Mammary epithelial cell (primary cell): ENCODE measurements at regions of chr2 and their contacts with region 1.

Region 1: DNA sequence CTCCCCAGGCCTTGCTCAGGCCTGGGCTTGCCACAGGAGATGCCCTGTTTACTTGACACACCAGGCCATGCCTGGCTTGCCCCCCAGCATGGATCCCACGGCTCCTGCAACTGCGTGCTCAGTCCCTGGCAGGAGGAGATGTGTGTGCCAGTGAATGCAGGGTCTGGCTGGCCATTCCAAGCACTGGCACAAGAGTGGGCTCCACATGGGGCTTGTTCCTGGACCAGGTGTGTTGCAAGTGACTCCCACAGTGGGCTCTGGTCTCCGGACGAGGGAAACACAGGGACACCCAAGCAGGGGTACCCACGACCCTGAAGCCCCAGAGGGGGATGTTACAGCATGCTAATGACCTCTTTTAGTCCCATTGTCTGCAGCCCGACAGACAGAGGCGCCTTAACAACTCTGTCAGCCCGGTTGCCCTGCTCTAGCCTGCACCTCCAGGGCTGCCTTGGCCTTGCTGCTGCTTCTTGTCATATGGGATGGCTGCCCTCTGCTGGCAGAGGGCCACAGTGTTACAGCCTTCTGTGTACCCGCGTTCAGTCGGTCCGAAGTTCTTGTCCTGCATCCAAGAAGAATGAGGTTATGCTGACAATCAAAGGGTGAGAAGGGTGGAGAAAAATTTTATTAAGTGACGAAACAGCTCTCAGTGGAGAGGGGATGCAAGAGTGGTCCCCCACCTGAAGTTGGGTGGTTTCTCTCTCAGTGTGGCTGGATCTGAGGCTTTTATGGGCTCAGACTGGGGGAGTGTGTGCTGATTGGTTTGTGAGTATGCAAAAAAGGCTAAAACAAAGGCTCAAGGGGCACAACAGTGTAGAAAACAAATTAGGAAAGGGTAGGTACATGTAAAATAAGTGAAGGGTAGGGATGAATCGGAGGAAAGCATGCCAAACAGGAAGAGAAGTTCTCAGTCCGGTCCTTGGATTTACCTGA is 180.4 kb downstream of the MBD5 start:
- DNase-seq: peak; percentile 37
- H3K4me3 ChIP-seq: no peak overlapping the region
- H3K27ac ChIP-seq: no peak overlapping the region
- H3K4me1 ChIP-seq: no peaks in the 10 kb centered on the region
- H3K27me3 ChIP-seq: no peaks in the 10 kb centered on the region
- CTCF ChIP-seq: peak; percentile 48 to 64

Region 2: DNA sequence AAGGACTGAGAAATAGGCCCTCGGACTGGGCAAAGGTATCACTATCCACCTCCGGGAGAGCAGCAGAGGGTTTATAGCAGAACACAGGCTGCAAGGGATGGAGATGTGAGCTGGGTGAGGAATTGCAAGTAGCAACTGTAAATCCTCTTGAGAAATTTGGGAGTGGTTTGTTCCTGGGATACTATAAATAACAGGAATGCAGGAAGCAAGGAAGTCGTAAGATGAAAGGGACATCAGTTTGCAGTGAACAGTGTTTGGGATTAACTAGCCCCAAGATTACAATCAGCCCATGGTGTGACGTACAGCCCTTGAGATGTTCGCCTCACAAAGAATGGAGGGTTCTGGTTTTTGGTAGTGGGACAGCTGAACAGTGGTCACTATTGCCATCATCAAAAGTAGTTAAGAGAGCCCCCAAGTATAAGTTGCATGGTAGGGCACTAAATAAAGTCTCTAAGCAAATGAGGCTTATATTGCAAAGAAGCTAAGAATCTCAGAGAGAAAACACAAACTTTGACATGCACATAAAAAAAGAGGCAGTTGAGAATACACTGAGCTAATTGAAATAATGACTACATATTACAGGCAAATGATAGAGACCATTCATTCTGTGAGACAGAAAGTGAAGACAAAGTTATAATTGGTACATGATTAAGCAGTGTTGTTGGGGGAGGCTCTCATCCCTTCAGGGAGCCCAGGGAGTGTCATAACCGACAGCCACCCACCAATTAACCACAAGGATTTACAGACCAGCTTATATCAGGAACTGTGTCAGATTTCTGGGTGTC is 719.0 kb before region 1 on chr2:
- CTCF ChIA-PET with region 1: no interaction called
- dilution Hi-C with region 1: no loop called
- in situ Hi-C with region 1: no loop called
- intact Hi-C with region 1: no loop called
- DNase-seq: no peak
- H3K4me3 ChIP-seq: no peak overlapping the region
- H3K27ac ChIP-seq: no peak overlapping the region
- H3K4me1 ChIP-seq: no peaks in the 10 kb centered on the region
- H3K27me3 ChIP-seq: no peaks in the 10 kb centered on the region
- CTCF ChIP-seq: no peak

Region 3: GRCh38 chr2:147937744-147938349 is 263.5 kb before region 1 on chr2:
- CTCF ChIA-PET with region 1: no interaction called
- dilution Hi-C with region 1: no loop called
- in situ Hi-C with region 1: no loop called
- intact Hi-C with region 1: loop called (anchors 1 kb)
- DNase-seq: peak; percentile 3
- H3K4me3 ChIP-seq: no peak overlapping the region
- H3K27ac ChIP-seq: no peak overlapping the region
- H3K4me1 ChIP-seq: no peaks in the 10 kb centered on the region
- H3K27me3 ChIP-seq: no peaks in the 10 kb centered on the region
- CTCF ChIP-seq: peak; percentile 76 to 88